ENCODE measurements at regions of chr11 and their contacts with region 1.

Region 1: GRCh38 chr11:57800444-57801182 is 39.0 kb downstream of the CTNND1 start:
- DNase-seq: peak in 4 of 9 experiments; percentile 17 to 82 (median 62)
- ATAC-seq: peak; percentile 97
- H3K4me3 ChIP-seq: no peak overlapping the region
- H3K4me3 Mint-ChIP-seq: no peak overlapping the region
- H3K27ac ChIP-seq: peak overlapping the region in 1 of 2 experiments; percentile 59
- H3K27ac Mint-ChIP-seq: peak overlapping the region; percentile 83
- H3K4me1 ChIP-seq: peaks cover 22% of the 10 kb centered on the region
- H3K4me1 Mint-ChIP-seq: peaks cover 20% of the 10 kb centered on the region
- H3K27me3 ChIP-seq: no peaks in the 10 kb centered on the region
- H3K27me3 Mint-ChIP-seq: no peaks in the 10 kb centered on the region
- CTCF ChIP-seq: peak; percentile 94

Region 2: GRCh38 chr11:57335343-57336110 is 465.1 kb before region 1 on chr11 and contains the start of gene SSRP1:
- CTCF ChIA-PET with region 1: interaction called, 3 read pairs
- POLR2A ChIA-PET with region 1: no interaction called
- intact Hi-C with region 1: loop called in 1 of 2 experiments (anchors 5 kb)
- DNase-seq: peak; percentile 70 to 95 (median 86)
- ATAC-seq: peak; percentile 96
- H3K4me3 ChIP-seq: peak within 1 kb of the TSS; percentile 78 to 82
- H3K4me3 Mint-ChIP-seq: peak within 1 kb of the TSS; percentile 86
- H3K27ac ChIP-seq: peak within 1 kb of the TSS; percentile 83 to 91
- H3K27ac Mint-ChIP-seq: peak within 1 kb of the TSS; percentile 94
- H3K4me1 ChIP-seq: peaks cover 23% of the 10 kb centered on the region
- H3K4me1 Mint-ChIP-seq: peaks cover 33% of the 10 kb centered on the region
- H3K27me3 ChIP-seq: no peaks in the 10 kb centered on the region
- H3K27me3 Mint-ChIP-seq: no peaks in the 10 kb centered on the region
- CTCF ChIP-seq: no peak
- total RNA-seq, gene SSRP1: 34.3 to 36.3 TPM

Region 3: GRCh38 chr11:57493507-57494503 is 306.8 kb before region 1 on chr11:
- CTCF ChIA-PET with region 1: interaction called, 3 read pairs
- POLR2A ChIA-PET with region 1: no interaction called
- intact Hi-C with region 1: loop called in 1 of 2 experiments (anchors 2 kb)
- DNase-seq: peak; percentile 57 to 85 (median 76)
- ATAC-seq: peak; percentile 97
- H3K4me3 ChIP-seq: no peak overlapping the region
- H3K4me3 Mint-ChIP-seq: no peak overlapping the region
- H3K27ac ChIP-seq: no peak overlapping the region
- H3K27ac Mint-ChIP-seq: no peak overlapping the region
- H3K4me1 ChIP-seq: no peaks in the 10 kb centered on the region
- H3K4me1 Mint-ChIP-seq: no peaks in the 10 kb centered on the region
- H3K27me3 ChIP-seq: no peaks in the 10 kb centered on the region
- H3K27me3 Mint-ChIP-seq: peaks cover 2% of the 10 kb centered on the region
- CTCF ChIP-seq: peak; percentile 91

Region 4: DNA sequence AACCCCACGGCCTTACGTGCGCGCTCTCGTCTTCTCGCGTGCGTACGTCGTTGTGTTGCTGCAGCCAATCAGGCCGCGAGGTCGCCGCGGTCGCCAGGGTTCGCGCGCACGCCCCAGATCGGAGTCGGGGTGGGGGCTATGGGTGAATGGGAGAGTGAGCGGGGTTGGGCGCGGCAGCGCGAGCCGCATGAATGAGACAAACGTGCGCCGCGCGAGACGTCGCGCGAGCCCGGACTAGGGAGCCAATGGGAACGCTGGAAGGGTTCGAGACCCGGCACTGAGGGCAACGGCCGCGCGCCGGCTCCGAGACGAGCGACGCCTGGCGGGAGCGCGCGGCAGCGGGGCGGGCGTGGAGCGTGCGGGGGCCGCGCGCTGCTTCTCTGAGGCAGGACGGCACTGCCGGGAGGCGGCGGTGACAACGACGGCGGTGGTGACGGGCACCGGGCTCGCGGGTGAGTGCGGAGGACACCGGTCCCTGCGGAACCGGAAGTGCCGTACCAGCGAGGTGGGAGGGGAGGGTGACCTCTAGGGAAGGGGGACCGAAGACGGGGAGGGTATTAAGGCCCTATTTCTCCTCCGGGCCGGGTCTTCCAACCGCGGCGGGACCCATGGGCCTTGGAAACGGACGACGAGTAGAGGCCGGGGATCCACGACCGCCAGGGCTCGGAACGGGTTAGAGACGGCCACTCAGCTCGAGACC is 132.7 kb before region 1 on chr11 and contains the start of gene ZDHHC5:
- CTCF ChIA-PET with region 1: interaction called, 14 read pairs
- POLR2A ChIA-PET with region 1: interaction called, 3 read pairs
- intact Hi-C with region 1: loop called (anchors 1 to 2 kb)
- DNase-seq: peak; percentile 99 to 100 (median 99)
- ATAC-seq: peak; percentile 85
- H3K4me3 ChIP-seq: peak within 1 kb of the TSS; percentile 83 to 96
- H3K4me3 Mint-ChIP-seq: peak within 1 kb of the TSS; percentile 85
- H3K27ac ChIP-seq: peak within 1 kb of the TSS; percentile 91 to 99
- H3K27ac Mint-ChIP-seq: peak within 1 kb of the TSS; percentile 97
- H3K4me1 ChIP-seq: peaks cover 41% of the 10 kb centered on the region
- H3K4me1 Mint-ChIP-seq: peaks cover 56% of the 10 kb centered on the region
- H3K27me3 ChIP-seq: no peaks in the 10 kb centered on the region
- H3K27me3 Mint-ChIP-seq: no peaks in the 10 kb centered on the region
- CTCF ChIP-seq: peak; percentile 31
- total RNA-seq, gene ZDHHC5: 65.0 to 66.7 TPM

Region 5: DNA sequence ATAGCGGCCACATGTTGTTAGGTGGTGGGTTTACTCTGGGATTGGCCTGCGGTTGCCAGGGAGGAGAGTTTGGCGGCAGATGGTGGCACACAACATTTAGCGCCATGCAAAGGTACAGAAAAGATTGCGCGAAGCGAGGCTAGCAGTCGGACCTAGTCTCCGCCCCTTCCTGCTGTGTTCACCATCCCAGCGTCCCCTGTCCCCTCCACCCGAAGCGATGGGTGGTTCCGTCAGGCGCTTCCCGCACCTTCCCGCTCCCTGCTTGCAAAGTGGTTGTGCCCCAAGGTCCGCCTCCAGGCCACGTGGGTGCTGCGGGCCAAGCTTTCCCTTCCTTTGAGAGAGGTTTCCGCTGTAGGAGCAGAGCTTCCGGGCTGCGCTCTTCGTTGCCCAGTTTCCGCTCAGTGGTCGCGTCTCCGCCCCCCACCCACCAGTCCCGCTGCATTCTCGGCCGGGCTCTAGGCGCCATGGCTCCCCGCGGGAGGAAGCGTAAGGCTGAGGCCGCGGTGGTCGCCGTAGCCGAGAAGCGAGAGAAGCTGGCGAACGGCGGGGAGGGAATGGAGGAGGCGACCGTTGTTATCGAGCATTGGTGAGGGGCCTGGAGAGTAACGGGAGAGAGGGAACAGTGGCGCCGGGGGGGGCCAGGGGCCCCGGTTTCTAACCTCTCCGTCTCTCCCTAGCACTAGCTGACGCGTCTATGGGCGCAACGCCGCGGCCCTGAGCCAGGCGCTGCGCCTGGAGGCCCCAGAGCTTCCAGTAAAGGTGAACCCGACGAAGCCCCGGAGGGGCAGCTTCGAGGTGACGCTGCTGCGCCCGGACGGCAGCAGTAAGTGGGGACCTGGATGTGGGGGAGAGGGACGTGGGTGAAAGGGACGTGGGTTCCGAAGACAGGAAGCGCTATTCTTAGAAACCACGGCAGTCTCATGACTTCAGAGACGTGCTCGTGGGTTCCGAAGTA is 59.2 kb before region 1 on chr11 and contains the start of gene SELENOH:
- CTCF ChIA-PET with region 1: interaction called, 98 read pairs
- POLR2A ChIA-PET with region 1: interaction called, 14 read pairs
- intact Hi-C with region 1: loop called (anchors 2 kb)
- DNase-seq: peak; percentile 83 to 97 (median 91)
- ATAC-seq: peak; percentile 85
- H3K4me3 ChIP-seq: peak within 1 kb of the TSS; percentile 90 to 97
- H3K4me3 Mint-ChIP-seq: peak within 1 kb of the TSS; percentile 92
- H3K27ac ChIP-seq: peak within 1 kb of the TSS; percentile 97
- H3K27ac Mint-ChIP-seq: peak within 1 kb of the TSS; percentile 98
- H3K4me1 ChIP-seq: peaks cover 34% of the 10 kb centered on the region
- H3K4me1 Mint-ChIP-seq: peaks cover 41% of the 10 kb centered on the region
- H3K27me3 ChIP-seq: no peaks in the 10 kb centered on the region
- H3K27me3 Mint-ChIP-seq: no peaks in the 10 kb centered on the region
- CTCF ChIP-seq: no peak
- total RNA-seq, gene SELENOH: 40.8 to 44.1 TPM

Region 6: GRCh38 chr11:57779275-57779674 is 21.3 kb before region 1 on chr11:
- CTCF ChIA-PET with region 1: interaction called, 12 read pairs
- POLR2A ChIA-PET with region 1: no interaction called
- intact Hi-C with region 1: no loop called
- DNase-seq: no peak
- ATAC-seq: no peak
- H3K4me3 ChIP-seq: no peak overlapping the region
- H3K4me3 Mint-ChIP-seq: no peak overlapping the region
- H3K27ac ChIP-seq: no peak overlapping the region
- H3K27ac Mint-ChIP-seq: no peak overlapping the region
- H3K4me1 ChIP-seq: peaks cover 26% of the 10 kb centered on the region
- H3K4me1 Mint-ChIP-seq: peaks cover 38% of the 10 kb centered on the region
- H3K27me3 ChIP-seq: no peaks in the 10 kb centered on the region
- H3K27me3 Mint-ChIP-seq: no peaks in the 10 kb centered on the region
- CTCF ChIP-seq: no peak

Region 7: DNA sequence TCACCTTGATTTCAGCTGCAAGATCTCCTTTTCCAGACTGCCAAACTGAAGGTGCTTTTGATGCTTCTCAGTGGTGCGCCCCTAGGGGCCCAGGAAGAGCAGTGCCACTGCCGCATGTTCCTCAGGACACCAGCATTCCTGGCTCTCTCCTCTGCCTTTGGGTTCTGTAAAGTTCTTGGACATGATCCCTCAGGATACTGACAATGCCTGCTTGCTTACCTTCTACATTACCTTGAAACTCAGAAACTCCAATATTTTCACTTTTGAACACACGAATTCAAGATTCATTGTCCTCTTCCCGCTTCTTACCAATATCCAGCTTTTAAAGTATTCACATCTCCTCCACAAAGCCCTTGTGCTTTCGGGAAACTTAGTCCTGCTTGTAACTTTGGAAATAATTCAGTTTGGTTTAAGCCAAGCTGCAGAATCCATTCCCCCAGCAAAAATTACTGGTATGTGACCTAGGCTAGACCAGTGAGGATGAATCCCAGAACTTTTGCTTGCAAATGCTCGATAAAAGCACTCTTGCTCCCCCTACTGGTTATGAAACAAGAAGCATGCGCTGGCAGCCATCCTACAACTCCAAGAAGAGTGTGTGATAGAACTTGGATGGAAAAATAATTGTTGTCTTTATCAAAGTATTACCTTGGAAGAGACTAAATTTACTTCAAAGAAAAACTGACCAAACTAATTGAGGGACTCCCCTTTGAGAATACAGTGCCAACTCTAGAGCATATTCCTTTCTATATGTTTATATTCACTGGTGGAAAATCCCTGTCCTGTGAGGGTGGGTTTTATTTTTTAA is 723.8 kb after region 1 on chr11:
- CTCF ChIA-PET with region 1: interaction called, 5 read pairs
- POLR2A ChIA-PET with region 1: no interaction called
- intact Hi-C with region 1: loop called in 1 of 2 experiments (anchors 5 kb)
- DNase-seq: peak in 8 of 9 experiments; percentile 17 to 85 (median 54)
- ATAC-seq: peak; percentile 71
- H3K4me3 ChIP-seq: peak overlapping the region in 1 of 2 experiments; percentile 24
- H3K4me3 Mint-ChIP-seq: peak overlapping the region; percentile 75
- H3K27ac ChIP-seq: peak overlapping the region; percentile 75 to 80
- H3K27ac Mint-ChIP-seq: peak overlapping the region; percentile 96
- H3K4me1 ChIP-seq: peaks cover 65% of the 10 kb centered on the region
- H3K4me1 Mint-ChIP-seq: peaks cover 69% of the 10 kb centered on the region
- H3K27me3 ChIP-seq: no peaks in the 10 kb centered on the region
- H3K27me3 Mint-ChIP-seq: no peaks in the 10 kb centered on the region
- CTCF ChIP-seq: peak; percentile 90